ENCODE measurements at regions of chr3 and their contacts with region 1.

Region 1: DNA sequence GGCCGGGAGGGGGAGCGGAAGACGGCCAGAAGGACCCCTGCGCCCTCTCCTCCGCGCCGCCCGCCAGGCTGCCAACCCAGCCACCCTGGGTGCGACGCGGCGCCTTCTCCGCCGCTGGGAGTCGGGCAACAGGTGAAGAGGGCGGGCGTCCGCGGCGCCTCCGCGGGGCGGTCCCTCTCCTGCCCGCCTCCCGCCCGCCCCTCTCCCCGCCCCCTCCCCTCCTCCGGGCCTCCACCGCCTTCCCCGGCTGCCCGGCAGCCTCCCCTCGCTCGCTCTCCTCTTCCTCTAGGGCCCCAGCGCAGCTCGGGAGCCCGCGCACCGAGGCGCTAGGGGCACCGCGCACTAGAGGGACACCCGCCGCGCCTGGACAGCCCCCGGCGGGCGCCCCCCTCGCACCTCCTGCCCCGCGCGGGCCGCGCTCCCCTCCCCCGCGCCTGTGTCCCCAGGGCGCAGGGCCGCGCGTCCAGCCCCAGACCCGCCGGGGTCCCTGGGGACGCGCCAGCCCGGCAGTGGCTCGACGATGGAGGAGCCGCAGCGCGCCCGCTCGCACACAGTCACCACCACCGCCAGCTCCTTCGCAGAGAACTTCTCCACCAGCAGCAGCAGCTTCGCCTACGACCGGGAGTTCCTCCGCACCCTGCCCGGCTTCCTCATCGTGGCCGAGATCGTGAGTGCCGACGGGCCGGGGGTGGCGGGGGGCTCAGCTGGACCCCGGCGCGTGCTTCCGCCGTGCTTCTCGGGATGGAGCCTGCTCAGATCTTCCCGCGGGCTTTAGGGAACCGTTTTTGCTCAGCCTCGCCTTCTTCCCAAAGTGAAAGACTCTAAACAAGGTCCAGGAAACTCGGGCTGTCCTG is at the start of gene CMTM8:
- DNase-seq: peak; percentile 54
- H3K4me3 Mint-ChIP-seq: peak within 1 kb of the TSS; percentile 81
- H3K27ac Mint-ChIP-seq: peak within 1 kb of the TSS; percentile 26
- H3K4me1 Mint-ChIP-seq: peaks cover 19% of the 10 kb centered on the region
- H3K27me3 Mint-ChIP-seq: peaks cover 34% of the 10 kb centered on the region
- total RNA-seq, gene CMTM8: 3.6 TPM in 2 replicates

Region 2: DNA sequence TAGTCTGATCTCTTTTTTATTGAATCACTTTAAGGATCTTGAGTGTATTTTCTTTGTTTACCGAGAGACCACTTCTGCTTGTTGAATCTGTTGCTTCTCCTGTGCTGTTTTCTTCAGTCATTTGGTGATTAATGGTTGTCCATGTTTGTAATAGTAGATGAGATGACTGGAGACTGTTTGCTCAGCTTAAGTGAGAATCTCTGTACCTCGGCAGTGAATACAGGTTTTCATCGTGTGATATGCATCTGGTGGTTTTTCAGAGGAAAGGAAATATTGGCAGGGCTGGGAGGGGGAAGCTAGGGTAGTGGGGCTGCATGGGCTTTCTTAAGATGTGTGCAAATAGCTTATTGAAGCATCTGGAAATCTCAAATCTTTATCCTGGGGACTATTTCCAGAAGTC is 19.0 kb after region 1 on chr3:
- intact Hi-C with region 1: loop called (anchors 2 kb)
- DNase-seq: no peak
- H3K4me3 Mint-ChIP-seq: no peak overlapping the region
- H3K27ac Mint-ChIP-seq: peak overlapping the region; percentile 52
- H3K4me1 Mint-ChIP-seq: peaks cover 34% of the 10 kb centered on the region
- H3K27me3 Mint-ChIP-seq: peaks cover 2% of the 10 kb centered on the region

Region 3: GRCh38 chr3:32275506-32275905 is 36.8 kb after region 1 on chr3:
- intact Hi-C with region 1: no loop called
- DNase-seq: no peak
- H3K4me3 Mint-ChIP-seq: no peak overlapping the region
- H3K27ac Mint-ChIP-seq: no peak overlapping the region
- H3K4me1 Mint-ChIP-seq: no peaks in the 10 kb centered on the region
- H3K27me3 Mint-ChIP-seq: peaks cover 4% of the 10 kb centered on the region

Region 4: GRCh38 chr3:32302601-32303398 is 64.1 kb after region 1 on chr3:
- intact Hi-C with region 1: no loop called
- DNase-seq: no peak
- H3K4me3 Mint-ChIP-seq: peak overlapping the region; percentile 31
- H3K27ac Mint-ChIP-seq: peak overlapping the region; percentile 69
- H3K4me1 Mint-ChIP-seq: peaks cover 47% of the 10 kb centered on the region
- H3K27me3 Mint-ChIP-seq: peaks cover 6% of the 10 kb centered on the region

Region 5: GRCh38 chr3:32577581-32578556 is 339.2 kb after region 1 on chr3:
- intact Hi-C with region 1: no loop called
- DNase-seq: no peak
- H3K4me3 Mint-ChIP-seq: peak overlapping the region; percentile 38
- H3K27ac Mint-ChIP-seq: peak overlapping the region; percentile 82
- H3K4me1 Mint-ChIP-seq: peaks cover 13% of the 10 kb centered on the region
- H3K27me3 Mint-ChIP-seq: no peaks in the 10 kb centered on the region